Vagina (tissue), 2 donors: ENCODE measurements at regions of chr4 and their contacts with region 1.

Region 1: GRCh38 chr4:102826890-102827673 is at the start of gene UBE2D3:
- DNase-seq: peak in 1 of 2 donors; percentile 94
- H3K4me3 ChIP-seq: peak within 1 kb of the TSS; percentile 79 to 88
- H3K27ac ChIP-seq: peak within 1 kb of the TSS; percentile 100
- H3K4me1 ChIP-seq: peaks cover 44% of the 10 kb centered on the region
- H3K27me3 ChIP-seq: no peaks in the 10 kb centered on the region
- CTCF ChIP-seq: no peak
- POLR2A ChIP-seq: peak in 1 of 2 donors; percentile 84
- total RNA-seq, gene UBE2D3: 347 TPM

Region 2: DNA sequence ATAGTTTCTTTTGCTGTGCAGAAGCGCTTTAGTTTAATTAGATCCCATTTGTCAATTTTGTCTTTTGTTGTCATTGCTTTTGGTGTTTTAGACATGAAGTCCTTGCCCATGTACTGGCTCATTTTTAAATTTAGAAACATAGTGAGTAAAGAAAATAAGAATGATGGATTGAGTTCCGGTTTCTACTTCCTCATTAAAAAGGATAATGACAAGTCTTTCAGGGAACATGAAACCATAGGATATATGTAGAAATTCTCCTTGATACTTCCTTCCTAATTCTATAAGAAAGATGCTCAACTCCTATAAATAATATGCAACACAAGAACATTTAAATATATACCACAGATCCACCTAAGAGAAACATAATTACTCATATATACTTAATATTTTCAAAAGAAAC is 795.7 kb before region 1 on chr4:
- intact Hi-C with region 1: no loop called
- DNase-seq: no peak
- H3K4me3 ChIP-seq: no peak overlapping the region
- H3K27ac ChIP-seq: no peak overlapping the region
- H3K4me1 ChIP-seq: peaks cover 3% of the 10 kb centered on the region
- H3K27me3 ChIP-seq: no peaks in the 10 kb centered on the region
- CTCF ChIP-seq: no peak
- POLR2A ChIP-seq: no peak

Region 3: DNA sequence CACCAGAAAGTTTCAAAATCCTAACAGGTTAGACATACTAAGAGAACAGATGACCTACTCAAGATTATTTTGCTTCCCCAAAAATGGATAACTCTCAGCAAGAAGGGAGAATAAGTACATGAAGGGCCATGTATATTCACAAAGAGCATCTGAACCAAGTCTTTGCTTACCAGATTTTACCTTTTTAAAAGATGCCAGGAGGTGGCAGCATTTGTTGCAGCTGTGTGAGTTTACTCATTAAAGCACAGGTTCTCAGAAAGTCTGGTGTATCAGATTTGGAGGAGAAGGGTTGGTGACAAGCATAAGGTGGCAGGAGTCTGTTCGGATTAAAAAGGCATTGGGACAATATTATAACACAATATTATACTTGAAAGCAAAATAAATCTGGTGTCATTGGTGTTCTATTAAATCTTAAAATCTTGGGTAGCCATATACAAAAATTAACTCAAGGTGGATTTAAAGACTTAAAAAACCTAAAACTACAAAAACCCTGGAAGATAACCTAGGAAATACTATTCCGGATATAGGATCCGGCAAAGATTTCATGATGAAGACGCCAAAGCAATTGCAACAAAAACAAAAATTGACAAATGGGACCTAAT is 377.2 kb before region 1 on chr4:
- intact Hi-C with region 1: no loop called
- DNase-seq: no peak
- H3K4me3 ChIP-seq: no peak overlapping the region
- H3K27ac ChIP-seq: no peak overlapping the region
- H3K4me1 ChIP-seq: no peaks in the 10 kb centered on the region
- H3K27me3 ChIP-seq: no peaks in the 10 kb centered on the region
- CTCF ChIP-seq: peak; percentile 36 to 64 (median 61)
- POLR2A ChIP-seq: no peak

Region 4: DNA sequence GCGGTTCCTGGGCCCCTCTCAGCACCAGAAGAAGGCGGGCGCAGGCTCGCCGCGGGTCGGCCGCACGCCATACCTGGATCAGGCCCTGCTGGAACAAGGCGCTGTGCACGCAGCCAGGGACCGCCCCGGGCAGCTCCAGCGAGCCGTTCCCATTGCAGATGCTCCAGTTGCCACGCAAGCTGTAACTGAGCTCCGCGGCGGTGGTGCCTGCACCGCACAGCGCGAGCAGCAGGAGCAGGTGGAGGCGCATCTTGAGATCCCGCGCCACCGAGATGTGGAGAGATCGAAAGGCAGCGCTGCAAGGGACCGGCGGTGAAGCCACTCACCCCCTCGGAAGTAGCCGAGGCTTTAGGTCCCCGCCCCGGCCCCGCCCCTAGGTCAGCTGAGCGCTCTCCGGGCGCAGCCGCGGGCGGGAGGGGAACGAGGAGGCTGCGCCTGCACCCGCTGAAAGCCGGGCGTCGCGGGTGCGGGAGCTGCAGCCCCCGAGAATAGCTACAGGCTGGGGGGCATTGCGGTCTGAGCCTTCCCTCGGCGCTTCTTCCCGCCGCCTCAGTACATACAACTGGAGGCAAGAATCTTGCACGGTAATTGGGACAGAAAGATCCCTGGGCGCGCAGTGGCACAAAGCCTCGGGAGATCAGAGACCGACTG is 66.3 kb before region 1 on chr4 and contains the start of gene MANBA:
- intact Hi-C with region 1: loop called (anchors 10 kb)
- DNase-seq: no peak
- H3K4me3 ChIP-seq: peak within 1 kb of the TSS; percentile 83 to 91
- H3K27ac ChIP-seq: peak within 1 kb of the TSS; percentile 85
- H3K4me1 ChIP-seq: peaks cover 22% of the 10 kb centered on the region
- H3K27me3 ChIP-seq: no peaks in the 10 kb centered on the region
- CTCF ChIP-seq: no peak
- POLR2A ChIP-seq: peak in 1 of 2 donors; percentile 63
- total RNA-seq, gene MANBA: 35.8 TPM

Region 5: GRCh38 chr4:102868781-102869568 is 41.9 kb after region 1 on chr4 and contains the start of gene CISD2:
- intact Hi-C with region 1: loop called (anchors 2 kb)
- DNase-seq: peak in 1 of 2 donors; percentile 95
- H3K4me3 ChIP-seq: peak within 1 kb of the TSS; percentile 70 to 86
- H3K27ac ChIP-seq: peak within 1 kb of the TSS; percentile 95
- H3K4me1 ChIP-seq: peaks cover 12% of the 10 kb centered on the region
- H3K27me3 ChIP-seq: no peaks in the 10 kb centered on the region
- CTCF ChIP-seq: no peak
- POLR2A ChIP-seq: peak in 1 of 2 donors; percentile 86
- total RNA-seq, gene CISD2: 11.3 TPM

Region 6: DNA sequence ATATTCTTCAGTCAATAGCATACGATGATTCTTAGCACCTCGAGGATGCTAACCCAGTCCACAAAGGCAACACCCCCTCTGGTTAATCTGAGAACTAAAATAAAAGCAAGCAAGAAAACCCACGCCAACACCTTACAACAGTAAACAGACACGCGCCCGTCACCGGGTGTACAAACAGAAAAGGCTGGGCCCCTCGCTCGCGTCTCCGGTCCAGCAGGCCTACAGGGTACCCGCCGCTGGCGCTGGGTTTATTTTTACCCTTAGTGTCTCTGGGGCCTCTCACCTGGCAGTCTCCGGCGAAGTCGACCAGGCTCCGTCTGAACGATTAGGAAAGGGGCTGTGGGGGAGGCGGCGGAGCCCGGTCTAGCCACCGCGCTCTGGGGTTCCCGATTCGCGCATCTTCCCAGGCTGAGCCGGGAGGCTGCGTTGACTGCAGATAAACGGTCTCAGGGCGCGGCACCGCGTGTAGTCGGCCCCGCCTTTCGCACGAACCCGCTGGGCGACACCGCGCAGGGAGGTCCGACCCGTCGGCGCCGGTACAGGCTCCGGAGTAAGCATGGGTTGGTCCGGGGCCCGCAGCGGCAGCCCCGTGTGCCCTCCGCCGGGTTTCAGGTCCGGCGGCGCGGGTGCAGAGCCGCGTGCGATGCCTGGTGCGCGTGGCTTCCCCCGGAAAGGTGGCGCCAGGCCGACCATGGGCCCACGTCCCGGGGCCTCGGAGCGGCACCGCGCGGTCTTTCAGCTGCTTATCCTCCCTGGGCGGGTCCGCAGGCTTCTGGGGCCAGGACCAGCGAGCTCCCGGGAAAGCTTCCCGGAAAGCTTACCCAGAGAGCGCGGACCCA is 249.0 kb after region 1 on chr4:
- intact Hi-C with region 1: loop called (anchors 5 kb)
- DNase-seq: no peak
- H3K4me3 ChIP-seq: peak overlapping the region; percentile 65 to 78
- H3K27ac ChIP-seq: peak overlapping the region; percentile 93
- H3K4me1 ChIP-seq: peaks cover 20% of the 10 kb centered on the region
- H3K27me3 ChIP-seq: no peaks in the 10 kb centered on the region
- CTCF ChIP-seq: peak in 1 of 3 experiments; percentile 18
- POLR2A ChIP-seq: no peak